Prostate gland (tissue), 2 donors: ENCODE measurements at regions of chr10 and their contacts with region 1.

Region 1: DNA sequence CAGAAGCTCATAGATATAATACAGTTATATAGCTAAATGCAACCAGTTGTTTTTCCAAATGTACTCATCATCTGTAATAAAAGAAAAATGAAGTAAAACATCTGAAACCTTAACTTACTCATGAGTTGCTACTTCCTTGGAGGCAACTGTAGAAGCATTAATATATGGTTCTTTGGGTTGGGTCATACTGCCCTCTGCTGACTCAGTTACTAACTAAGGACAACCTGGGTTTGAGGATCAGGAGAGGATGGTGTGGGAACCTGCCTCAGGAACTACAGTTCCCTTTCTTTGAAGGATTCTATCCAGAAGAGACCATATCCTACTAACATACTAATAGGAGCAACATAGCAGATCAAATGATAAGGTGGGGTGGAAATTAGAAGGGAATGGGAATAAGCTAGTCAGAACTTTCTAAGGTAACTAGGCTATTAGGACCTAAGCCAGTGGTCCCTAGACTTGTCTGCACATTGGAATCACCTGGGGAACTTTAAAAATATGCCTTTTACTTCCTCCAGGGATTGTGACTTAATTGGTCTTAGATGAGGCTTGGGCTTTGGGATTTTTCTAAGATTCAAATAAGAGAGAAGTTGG is 20.7 kb downstream of the COX15 start:
- DNase-seq: peak; percentile 51
- H3K4me3 ChIP-seq: no peak overlapping the region
- H3K27ac ChIP-seq: no peak overlapping the region
- H3K4me1 ChIP-seq: no peaks in the 10 kb centered on the region
- H3K27me3 ChIP-seq: no peaks in the 10 kb centered on the region
- CTCF ChIP-seq: peak in 3 of 4 experiments; percentile 43 to 62 (median 54)
- POLR2A ChIP-seq: no peak

Region 2: GRCh38 chr10:99435986-99436638 is 275.1 kb before region 1 on chr10:
- intact Hi-C with region 1: loop called (anchors 5 kb)
- DNase-seq: peak; percentile 16
- H3K4me3 ChIP-seq: no peak overlapping the region
- H3K27ac ChIP-seq: no peak overlapping the region
- H3K4me1 ChIP-seq: peaks cover 7% of the 10 kb centered on the region
- H3K27me3 ChIP-seq: no peaks in the 10 kb centered on the region
- CTCF ChIP-seq: peak in 3 of 4 experiments; percentile 36 to 67 (median 62)
- POLR2A ChIP-seq: no peak

Region 3: DNA sequence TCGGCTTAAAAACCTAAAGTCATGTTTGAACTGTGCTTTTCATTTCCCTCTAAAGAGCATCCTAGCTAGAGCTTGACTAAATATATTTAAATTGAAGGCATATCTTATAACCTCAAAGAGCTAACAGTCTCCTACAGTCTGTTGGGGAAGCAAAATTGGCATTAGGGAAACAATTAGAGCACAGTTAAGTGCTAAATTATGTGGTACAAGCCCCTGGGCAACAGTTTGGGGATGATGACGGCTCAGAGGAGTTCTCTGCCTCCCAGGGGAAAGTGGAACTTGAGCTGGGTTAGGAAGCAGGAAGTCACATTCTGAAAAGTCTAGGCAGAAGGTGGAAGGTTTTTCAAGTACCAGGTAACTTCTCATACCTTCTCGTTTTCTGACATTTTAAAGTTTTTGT is 262.2 kb before region 1 on chr10:
- intact Hi-C with region 1: no loop called
- DNase-seq: no peak
- H3K4me3 ChIP-seq: no peak overlapping the region
- H3K27ac ChIP-seq: no peak overlapping the region
- H3K4me1 ChIP-seq: no peaks in the 10 kb centered on the region
- H3K27me3 ChIP-seq: no peaks in the 10 kb centered on the region
- CTCF ChIP-seq: no peak
- POLR2A ChIP-seq: no peak